BJ (cell line): ENCODE measurements at regions of chr17 and their contacts with region 1.

Region 1: DNA sequence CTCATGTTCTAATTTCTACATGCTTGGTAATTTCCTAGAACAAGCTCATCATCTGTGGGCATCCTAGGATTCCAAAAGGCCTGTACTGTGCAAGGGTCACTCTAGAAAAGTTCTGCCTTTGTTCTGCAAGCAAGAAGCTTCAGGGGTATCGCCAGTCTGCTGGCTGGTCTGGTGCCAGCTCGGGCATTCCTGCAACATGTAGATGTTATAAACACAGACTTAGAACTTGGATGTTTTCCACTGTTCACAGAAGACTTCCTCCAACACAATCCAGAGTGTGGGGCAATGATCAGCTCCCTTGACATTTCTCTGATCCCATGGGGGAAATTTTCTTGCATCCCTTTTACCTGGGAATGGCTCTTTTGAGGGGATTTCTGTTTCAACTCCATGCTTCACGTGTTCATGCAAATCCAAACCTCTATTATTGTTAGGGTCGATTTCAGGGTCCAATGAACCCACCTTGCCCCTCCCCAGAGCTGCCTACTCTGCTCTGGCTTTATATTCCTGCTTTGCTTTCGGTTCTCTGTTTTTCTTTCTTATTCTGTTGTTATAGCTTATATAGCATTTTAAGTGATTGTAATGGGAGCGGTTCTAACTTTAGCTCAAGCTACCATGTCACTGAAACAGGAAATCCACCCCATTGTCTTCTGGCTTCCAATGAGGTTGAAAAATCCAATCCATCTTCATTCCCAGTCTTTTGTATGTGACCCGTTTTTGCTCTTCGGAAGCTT is 25.3 kb downstream of the UBE2O start:
- DNase-seq: no peak
- H3K4me3 ChIP-seq: no peak overlapping the region
- H3K27me3 ChIP-seq: no peaks in the 10 kb centered on the region
- CTCF ChIP-seq: no peak

Region 2: GRCh38 chr17:76417499-76418143 is 10.0 kb before region 1 on chr17:
- CTCF ChIA-PET with region 1: interaction called, 12 read pairs
- POLR2A ChIA-PET with region 1: no interaction called
- DNase-seq: no peak
- H3K4me3 ChIP-seq: no peak overlapping the region
- H3K27me3 ChIP-seq: no peaks in the 10 kb centered on the region
- CTCF ChIP-seq: no peak

Region 3: GRCh38 chr17:76458580-76459490 is 31.2 kb after region 1 on chr17:
- CTCF ChIA-PET with region 1: interaction called, 11 read pairs
- POLR2A ChIA-PET with region 1: no interaction called
- DNase-seq: no peak
- H3K4me3 ChIP-seq: no peak overlapping the region
- H3K27me3 ChIP-seq: peaks cover 5% of the 10 kb centered on the region; the same call in 1 of the 2 replicates
- CTCF ChIP-seq: peak; percentile 77

Region 4: DNA sequence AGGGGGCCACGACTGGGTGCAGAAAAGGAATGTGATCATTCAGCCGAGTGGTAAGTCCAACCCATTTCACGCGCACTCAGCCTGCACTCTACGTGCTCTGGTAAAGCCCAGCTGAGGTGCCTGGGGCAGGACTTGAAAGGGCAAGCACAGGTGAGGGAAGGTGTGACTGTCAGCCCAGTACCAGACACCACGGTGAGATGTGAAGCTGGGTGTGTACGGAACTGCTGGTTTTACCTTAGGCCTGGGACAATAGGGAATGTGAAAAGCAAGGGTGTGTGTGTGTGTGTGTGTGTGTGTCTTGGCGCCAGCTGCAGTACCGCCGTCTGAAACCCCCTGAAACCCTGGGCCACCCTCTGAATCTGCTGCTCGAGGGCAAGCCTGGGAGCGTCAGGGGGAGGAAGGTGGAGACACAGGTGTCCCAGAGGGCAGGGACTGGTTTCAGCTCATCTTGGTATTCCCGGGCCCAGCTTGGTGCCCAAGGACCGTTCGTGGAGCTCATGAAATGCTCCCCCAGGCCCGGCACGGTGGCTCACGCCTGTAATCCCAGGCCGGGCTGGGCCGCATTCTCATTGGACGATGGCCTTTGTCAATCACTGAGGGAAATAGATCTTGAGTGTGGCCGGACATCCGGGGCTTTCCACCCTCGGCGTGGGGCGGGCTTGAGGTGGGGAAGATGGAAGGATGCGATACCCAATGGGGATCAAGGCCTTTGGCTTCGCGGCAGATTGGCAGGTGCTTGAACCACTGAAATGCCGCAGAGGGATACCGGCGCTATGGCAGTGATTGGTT is 243.7 kb after region 1 on chr17:
- CTCF ChIA-PET with region 1: no interaction called
- POLR2A ChIA-PET with region 1: no interaction called
- DNase-seq: peak; percentile 98
- H3K4me3 ChIP-seq: peak overlapping the region; percentile 57
- H3K27me3 ChIP-seq: no peaks in the 10 kb centered on the region
- CTCF ChIP-seq: no peak